ENCODE measurements at regions of chr14 and their contacts with region 1.

Region 1: GRCh38 chr14:58331111-58331510 is 32.8 kb downstream of the ARID4A start:
- DNase-seq: peak; percentile 95
- H3K4me3 Mint-ChIP-seq: peak overlapping the region; percentile 73
- H3K27ac Mint-ChIP-seq: peak overlapping the region; percentile 83
- H3K4me1 Mint-ChIP-seq: peaks cover 20% of the 10 kb centered on the region
- H3K27me3 Mint-ChIP-seq: no peaks in the 10 kb centered on the region

Region 2: DNA sequence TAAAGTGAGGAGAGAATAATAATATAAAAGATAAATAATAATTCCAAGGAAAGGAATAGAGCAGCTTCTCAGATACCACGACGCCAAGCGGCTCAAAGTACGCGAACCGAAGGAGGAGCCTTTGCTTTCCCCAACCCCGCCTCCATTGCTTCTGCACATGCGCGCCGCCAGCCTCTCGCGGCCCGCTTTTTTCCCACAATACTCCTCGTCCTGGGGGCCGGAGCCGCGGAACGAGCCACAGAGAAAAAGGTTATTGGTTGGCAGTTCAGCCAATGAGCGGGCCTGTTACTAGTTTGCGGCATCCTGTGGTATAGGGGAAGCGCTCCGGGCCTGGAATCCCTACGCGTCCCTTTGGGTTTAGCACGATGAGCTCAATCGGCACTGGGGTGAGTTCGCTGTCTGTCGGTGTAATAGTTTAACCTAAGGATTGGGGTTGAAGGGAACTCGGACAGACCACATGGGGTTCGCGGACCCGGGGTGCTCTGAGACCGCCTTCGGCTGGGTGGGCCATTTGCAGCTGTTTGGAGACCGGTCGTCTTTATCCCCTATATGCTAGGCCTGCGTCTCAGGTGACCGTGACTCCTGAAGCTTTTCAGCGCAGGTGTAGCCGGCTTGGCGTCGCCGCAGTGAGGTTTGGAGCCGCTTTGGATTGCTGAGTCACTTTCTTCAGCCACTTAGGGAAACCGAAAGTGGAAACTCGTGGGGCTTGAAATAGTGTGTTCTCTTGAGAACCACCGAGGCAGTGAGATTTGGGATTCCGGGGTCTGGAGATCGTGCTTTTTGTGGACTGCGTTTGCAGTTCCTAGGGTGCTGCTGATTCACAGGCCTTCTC is 86.3 kb before region 1 on chr14 and contains the start of gene PSMA3:
- CTCF ChIA-PET with region 1: no interaction called
- intact Hi-C with region 1: loop called (anchors 1 kb)
- DNase-seq: peak; percentile 99
- H3K4me3 Mint-ChIP-seq: peak within 1 kb of the TSS; percentile 98
- H3K27ac Mint-ChIP-seq: peak within 1 kb of the TSS; percentile 99
- H3K4me1 Mint-ChIP-seq: peaks cover 43% of the 10 kb centered on the region
- H3K27me3 Mint-ChIP-seq: no peaks in the 10 kb centered on the region
- total RNA-seq, gene PSMA3: 399 to 424 TPM

Region 3: DNA sequence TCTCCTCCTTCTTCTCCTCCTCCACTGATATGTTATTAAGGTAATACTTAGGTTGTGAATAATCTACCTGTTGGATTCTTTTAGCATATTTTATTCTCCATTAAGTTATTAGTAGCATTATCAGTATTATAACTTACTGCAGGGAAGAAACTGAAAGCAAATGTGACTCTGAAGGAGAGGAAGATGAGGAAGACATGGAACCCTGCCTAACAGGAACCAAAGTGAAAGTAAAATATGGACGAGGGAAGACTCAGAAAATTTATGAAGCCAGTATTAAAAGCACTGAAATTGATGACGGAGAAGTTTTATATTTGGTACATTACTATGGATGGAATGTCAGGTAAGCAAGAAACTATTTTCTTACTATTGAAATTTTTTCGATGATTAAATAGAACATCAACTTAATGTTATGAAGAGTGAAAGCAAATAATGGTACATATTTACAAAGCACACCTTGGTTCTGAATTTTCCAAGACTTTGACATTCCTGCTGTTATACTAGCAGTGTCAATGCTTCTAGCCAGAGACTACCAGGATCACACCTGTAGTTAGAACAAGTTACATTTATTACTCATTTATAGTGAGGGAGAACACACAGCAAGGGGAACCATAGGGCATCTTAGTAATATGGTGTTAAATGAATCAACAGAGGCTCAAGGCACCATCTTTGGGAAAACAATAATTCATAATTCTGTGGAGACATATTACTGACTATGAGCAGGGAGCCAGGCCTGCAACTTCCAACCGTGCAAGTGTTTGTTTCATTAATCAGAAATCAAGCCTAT is 22.6 kb after region 1 on chr14:
- CTCF ChIA-PET with region 1: no interaction called
- intact Hi-C with region 1: loop called (anchors 1 kb)
- DNase-seq: no peak
- H3K4me3 Mint-ChIP-seq: peak overlapping the region; percentile 54
- H3K27ac Mint-ChIP-seq: peak overlapping the region; percentile 52
- H3K4me1 Mint-ChIP-seq: peaks cover 22% of the 10 kb centered on the region
- H3K27me3 Mint-ChIP-seq: no peaks in the 10 kb centered on the region

Region 4: GRCh38 chr14:58376791-58377190 is 45.7 kb after region 1 on chr14:
- CTCF ChIA-PET with region 1: no interaction called
- intact Hi-C with region 1: no loop called
- DNase-seq: no peak
- H3K4me3 Mint-ChIP-seq: no peak overlapping the region
- H3K27ac Mint-ChIP-seq: no peak overlapping the region
- H3K4me1 Mint-ChIP-seq: no peaks in the 10 kb centered on the region
- H3K27me3 Mint-ChIP-seq: no peaks in the 10 kb centered on the region

Measured in activated naive CD4-positive, alpha-beta T cell treated with anti-CD3 and anti-CD28 coated beads for 36 hours (primary cell).